Ascending aorta (tissue), 2 donors: ENCODE measurements at regions of chr10 and their contacts with region 1.

Region 1: DNA sequence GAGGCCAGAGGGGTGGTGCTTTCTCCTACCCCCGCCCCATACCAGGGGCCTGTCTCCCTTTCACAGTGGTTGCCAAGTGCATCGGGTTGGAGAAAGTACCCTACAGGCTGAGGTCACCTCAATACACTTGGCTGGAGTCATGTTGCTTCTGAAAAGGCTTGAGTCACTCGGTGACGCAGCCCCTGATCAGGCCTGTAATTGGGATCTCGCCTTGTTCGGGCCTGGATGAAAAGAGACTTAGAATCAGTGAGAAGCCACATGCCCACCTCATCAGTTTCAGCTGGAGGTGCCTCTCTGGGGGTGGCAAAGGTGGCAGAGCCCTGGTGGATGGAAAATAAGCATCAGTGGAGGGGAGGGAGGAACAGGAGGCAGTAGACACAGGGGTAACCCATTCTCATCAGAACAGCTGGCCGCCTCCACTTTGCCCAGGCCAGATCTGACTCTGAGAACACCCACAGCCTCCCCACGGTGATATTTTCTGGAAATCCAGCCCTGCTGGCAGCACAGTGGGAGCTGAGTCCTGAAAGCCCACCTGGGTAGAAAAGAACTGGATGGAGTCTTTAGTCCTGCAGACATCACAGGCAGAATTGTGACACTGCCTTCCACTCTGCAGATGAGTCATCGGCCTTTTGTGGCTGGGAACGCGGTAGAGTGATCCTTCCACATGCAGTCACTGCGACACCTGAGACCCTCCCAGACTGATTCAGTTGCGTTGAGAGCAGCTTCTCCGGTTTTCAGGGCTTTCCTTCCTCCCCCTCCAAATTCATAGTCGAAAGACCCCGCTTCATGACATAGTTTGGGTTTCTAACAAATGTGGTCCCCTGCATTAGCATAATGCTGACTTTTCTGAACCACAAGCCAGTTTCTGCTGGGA is 108.0 kb downstream of the GRK5 start:
- DNase-seq: peak; percentile 75 to 95
- H3K4me3 ChIP-seq: no peak overlapping the region
- H3K27ac ChIP-seq: peak overlapping the region; percentile 86 to 95
- H3K4me1 ChIP-seq: peaks cover 33 to 87% of the 10 kb centered on the region in 2 donors
- H3K27me3 ChIP-seq: no peaks in the 10 kb centered on the region
- CTCF ChIP-seq: no peak

Region 2: GRCh38 chr10:119246862-119247549 is 68.4 kb before region 1 on chr10:
- intact Hi-C with region 1: loop called (anchors 1 kb)
- DNase-seq: peak; percentile 39 to 95
- H3K4me3 ChIP-seq: peak overlapping the region in 1 of 2 donors; percentile 31
- H3K27ac ChIP-seq: peak overlapping the region; percentile 92 to 93
- H3K4me1 ChIP-seq: peaks cover 15 to 46% of the 10 kb centered on the region in 2 donors
- H3K27me3 ChIP-seq: no peaks in the 10 kb centered on the region
- CTCF ChIP-seq: no peak

Region 3: GRCh38 chr10:119270762-119271366 is 44.5 kb before region 1 on chr10:
- intact Hi-C with region 1: loop called (anchors 2 kb)
- DNase-seq: peak in 1 of 2 donors; percentile 90
- H3K4me3 ChIP-seq: peak overlapping the region in 1 of 2 donors; percentile 47
- H3K27ac ChIP-seq: peak overlapping the region; percentile 76 to 90
- H3K4me1 ChIP-seq: peaks cover 24 to 35% of the 10 kb centered on the region in 2 donors
- H3K27me3 ChIP-seq: no peaks in the 10 kb centered on the region
- CTCF ChIP-seq: no peak